T-cell (primary cell): ENCODE measurements at regions of chr20 and their contacts with region 1.

Region 1: DNA sequence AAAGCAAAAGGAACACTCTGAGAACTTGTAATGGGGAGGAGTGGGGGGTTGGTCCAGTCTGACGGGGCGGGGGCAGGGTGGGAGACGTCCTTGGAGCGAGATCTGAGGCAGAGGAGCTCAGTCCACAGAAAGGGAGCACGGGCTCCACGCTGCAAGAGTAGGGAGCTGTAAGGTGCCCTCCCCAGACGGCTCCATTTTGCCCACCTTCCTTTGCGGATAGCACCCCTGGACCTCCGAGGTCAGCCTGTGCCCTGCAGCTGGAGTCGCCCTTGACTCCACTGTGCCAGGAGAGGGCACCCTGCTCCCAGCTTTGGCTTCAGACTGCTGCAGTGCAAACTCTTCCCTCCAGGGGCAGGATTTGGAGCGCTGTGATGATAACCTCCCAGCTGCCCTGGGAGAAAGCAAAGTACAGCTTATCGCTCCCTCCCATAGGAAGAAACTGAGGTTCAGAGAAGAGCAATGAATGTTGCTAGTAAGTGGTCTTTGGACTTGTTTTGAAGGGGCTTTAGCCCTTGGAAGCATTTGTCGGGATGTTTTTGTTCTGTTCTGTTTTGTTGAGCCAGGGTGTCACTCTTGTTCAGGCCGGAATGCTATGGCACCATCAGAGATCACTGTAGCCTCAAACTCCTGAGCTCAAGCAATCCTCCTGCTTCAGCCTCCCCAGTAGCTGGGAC is 9.5 kb upstream of the AHCY start:
- DNase-seq: peak; percentile 67 to 93 (median 82)
- ATAC-seq: peak; percentile 98 to 100 (median 99)
- H3K4me3 ChIP-seq: no peak overlapping the region
- H3K4me3 Mint-ChIP-seq: peak overlapping the region in 1 of 3 donors; percentile 50
- H3K27ac ChIP-seq: no peak overlapping the region
- H3K27ac Mint-ChIP-seq: peak overlapping the region; percentile 24 to 55
- H3K4me1 ChIP-seq: peaks cover 0 to 21% of the 10 kb centered on the region in 2 experiments
- H3K4me1 Mint-ChIP-seq: peaks cover 5 to 15% (median 7%) of the 10 kb centered on the region in 3 donors
- H3K27me3 ChIP-seq: peaks cover 4 to 27% of the 10 kb centered on the region in 2 experiments
- H3K27me3 Mint-ChIP-seq: peaks cover 4 to 19% of the 10 kb centered on the region in 2 donors

Region 2: GRCh38 chr20:34337982-34338726 is 25.5 kb after region 1 on chr20:
- CTCF ChIA-PET with region 1: interaction called in 1 of 2 experiments, 10 read pairs
- POLR2A ChIA-PET with region 1: no interaction called
- DNase-seq: peak in 15 of 35 experiments; percentile 1 to 68 (median 13)
- ATAC-seq: peak in 2 of 4 experiments; percentile 48 to 68
- H3K4me3 ChIP-seq: no peak overlapping the region
- H3K4me3 Mint-ChIP-seq: peak overlapping the region in 1 of 3 donors; percentile 37
- H3K27ac ChIP-seq: peak overlapping the region; percentile 55
- H3K27ac Mint-ChIP-seq: peak overlapping the region; percentile 3 to 51
- H3K4me1 ChIP-seq: peaks cover 0 to 50% of the 10 kb centered on the region in 2 experiments
- H3K4me1 Mint-ChIP-seq: peaks cover 0 to 21% (median 0%) of the 10 kb centered on the region in 3 donors
- H3K27me3 ChIP-seq: no peaks in the 10 kb centered on the region
- H3K27me3 Mint-ChIP-seq: no peaks in the 10 kb centered on the region

Region 3: DNA sequence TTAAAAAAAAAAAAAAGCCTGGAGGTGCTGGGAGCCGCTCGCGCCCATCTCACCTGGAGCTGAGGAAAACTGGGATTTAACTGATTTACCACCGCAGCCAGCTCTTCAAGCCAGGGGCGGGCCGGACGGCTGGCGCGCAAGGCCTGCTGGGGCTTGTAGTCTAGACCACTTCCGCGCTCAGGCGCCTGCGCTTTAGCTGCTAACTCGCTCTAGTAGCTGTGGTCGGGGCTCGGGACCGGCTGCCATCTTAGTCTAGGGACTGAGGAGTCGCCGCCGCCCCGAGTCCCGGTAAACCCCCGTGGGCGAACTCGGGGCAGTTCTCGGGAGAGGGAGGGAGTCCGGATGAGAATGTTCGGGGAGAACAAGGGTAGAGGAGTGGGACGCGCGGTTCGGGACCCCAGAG is 50.4 kb after region 1 on chr20 and contains the start of gene ITCH:
- CTCF ChIA-PET with region 1: interaction called in 1 of 2 experiments, 20 read pairs
- POLR2A ChIA-PET with region 1: no interaction called
- DNase-seq: peak; percentile 74 to 94 (median 89)
- ATAC-seq: peak; percentile 99 to 100 (median 100)
- H3K4me3 ChIP-seq: peak within 1 kb of the TSS; percentile 77 to 81
- H3K4me3 Mint-ChIP-seq: peak within 1 kb of the TSS; percentile 84 to 100 (median 99)
- H3K27ac ChIP-seq: peak within 1 kb of the TSS; percentile 85
- H3K27ac Mint-ChIP-seq: peak within 1 kb of the TSS; percentile 99 to 100
- H3K4me1 ChIP-seq: peaks cover 10 to 48% of the 10 kb centered on the region in 2 experiments
- H3K4me1 Mint-ChIP-seq: peaks cover 38 to 46% (median 45%) of the 10 kb centered on the region in 3 donors
- H3K27me3 ChIP-seq: peaks cover 0 to 5% of the 10 kb centered on the region in 2 experiments
- H3K27me3 Mint-ChIP-seq: no peaks in the 10 kb centered on the region
- total RNA-seq, gene ITCH: 50.5 to 63.6 (median 53.3) TPM

Region 4: DNA sequence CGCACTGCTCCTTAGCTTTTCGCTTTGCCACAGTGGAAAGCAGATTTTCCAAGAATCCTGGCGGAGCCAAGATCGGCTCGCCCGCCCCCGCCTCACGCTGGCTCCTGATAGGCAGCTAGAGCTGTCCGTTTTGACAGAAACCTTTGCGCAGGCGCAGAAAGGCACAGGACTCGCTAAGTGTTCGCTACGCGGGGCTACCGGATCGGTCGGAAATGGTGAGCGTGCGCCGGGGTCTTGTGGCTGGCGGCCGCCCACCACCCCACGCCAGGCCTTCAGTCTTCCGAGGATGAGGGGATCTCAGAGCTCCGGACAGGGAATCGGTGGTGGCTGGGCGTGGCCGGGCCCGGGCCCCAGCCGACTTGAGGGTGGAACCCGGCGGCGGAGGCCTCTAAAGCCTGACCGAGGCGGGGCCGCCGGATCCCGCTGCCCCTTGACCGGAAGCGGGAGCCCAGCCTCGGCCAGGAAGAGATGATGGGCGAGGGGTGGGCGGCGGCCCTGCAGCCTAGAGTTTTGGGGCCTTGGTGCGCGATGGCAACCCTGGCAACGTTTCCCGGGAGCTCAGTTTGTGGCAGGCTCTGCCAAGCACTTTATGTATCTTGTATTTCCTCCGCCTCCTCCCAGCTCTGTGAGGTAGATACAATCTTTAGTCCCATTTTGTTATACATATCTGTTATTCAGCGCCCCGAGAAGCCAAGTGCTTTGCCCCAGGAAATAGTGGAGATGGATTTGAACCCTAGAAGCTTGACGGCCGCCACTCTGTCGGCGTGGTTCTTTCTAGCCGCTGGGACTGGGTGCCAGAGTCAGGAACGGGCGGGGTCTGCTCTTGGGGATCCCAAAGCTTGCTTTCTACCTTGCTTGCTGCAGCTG is 203.8 kb after region 1 on chr20 and contains the start of gene DYNLRB1:
- CTCF ChIA-PET with region 1: interaction called, 13 to 41 read pairs
- POLR2A ChIA-PET with region 1: no interaction called
- DNase-seq: peak; percentile 85 to 96 (median 91)
- ATAC-seq: peak; percentile 84 to 86 (median 85)
- H3K4me3 ChIP-seq: peak within 1 kb of the TSS; percentile 90 to 92
- H3K4me3 Mint-ChIP-seq: peak within 1 kb of the TSS; percentile 95 to 99 (median 98)
- H3K27ac ChIP-seq: peak within 1 kb of the TSS; percentile 72
- H3K27ac Mint-ChIP-seq: peak within 1 kb of the TSS; percentile 96 to 97
- H3K4me1 ChIP-seq: peaks cover 5 to 24% of the 10 kb centered on the region in 2 experiments
- H3K4me1 Mint-ChIP-seq: peaks cover 52 to 64% (median 55%) of the 10 kb centered on the region in 3 donors
- H3K27me3 ChIP-seq: no peaks in the 10 kb centered on the region
- H3K27me3 Mint-ChIP-seq: no peaks in the 10 kb centered on the region
- total RNA-seq, gene DYNLRB1: 49.6 to 83.6 (median 73.8) TPM

Region 5: GRCh38 chr20:34522969-34523871 is 210.5 kb after region 1 on chr20:
- CTCF ChIA-PET with region 1: interaction called, 13 to 41 read pairs
- POLR2A ChIA-PET with region 1: no interaction called
- DNase-seq: peak in 31 of 35 experiments; percentile 20 to 70 (median 45)
- ATAC-seq: peak; percentile 48 to 79 (median 70)
- H3K4me3 ChIP-seq: no peak overlapping the region
- H3K4me3 Mint-ChIP-seq: no peak overlapping the region
- H3K27ac ChIP-seq: no peak overlapping the region
- H3K27ac Mint-ChIP-seq: no peak overlapping the region
- H3K4me1 ChIP-seq: peaks cover 0 to 23% of the 10 kb centered on the region in 2 experiments
- H3K4me1 Mint-ChIP-seq: peaks cover 54 to 64% (median 59%) of the 10 kb centered on the region in 3 donors
- H3K27me3 ChIP-seq: no peaks in the 10 kb centered on the region
- H3K27me3 Mint-ChIP-seq: no peaks in the 10 kb centered on the region

Region 6: DNA sequence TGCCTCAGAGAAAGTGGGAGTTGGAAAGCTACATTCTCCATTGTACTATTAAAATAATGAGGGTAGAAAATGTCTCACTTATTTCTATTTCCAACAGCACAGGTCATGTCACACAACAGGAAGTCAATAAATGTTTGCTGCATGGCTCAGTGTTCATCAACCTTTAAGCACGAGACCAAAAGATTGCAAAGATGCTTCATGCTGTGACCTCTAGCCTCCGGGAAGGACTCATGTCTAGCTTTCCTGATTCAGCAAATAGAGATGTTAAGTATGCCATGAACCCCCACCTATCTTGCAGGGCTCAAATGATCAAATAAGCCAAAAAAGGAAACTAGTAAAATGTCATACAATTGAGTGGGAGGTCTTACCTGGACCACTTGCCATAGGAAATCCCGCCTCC is 455.4 kb after region 1 on chr20:
- CTCF ChIA-PET with region 1: interaction called, 6 to 67 read pairs
- POLR2A ChIA-PET with region 1: no interaction called
- DNase-seq: no peak
- ATAC-seq: no peak
- H3K4me3 ChIP-seq: no peak overlapping the region
- H3K4me3 Mint-ChIP-seq: no peak overlapping the region
- H3K27ac ChIP-seq: no peak overlapping the region
- H3K27ac Mint-ChIP-seq: no peak overlapping the region
- H3K4me1 ChIP-seq: no peaks in the 10 kb centered on the region
- H3K4me1 Mint-ChIP-seq: no peaks in the 10 kb centered on the region
- H3K27me3 ChIP-seq: no peaks in the 10 kb centered on the region
- H3K27me3 Mint-ChIP-seq: no peaks in the 10 kb centered on the region